Posterior vena cava (tissue), 2 donors: ENCODE measurements at regions of chr22 and their contacts with region 1.

Region 1: GRCh38 chr22:26589845-26590736 is at the start of gene TPST2:
- DNase-seq: peak; percentile 94
- total RNA-seq, gene TPST2: 24.5 to 33.8 TPM

Region 2: GRCh38 chr22:26511857-26512793 is 78.0 kb before region 1 on chr22 and contains the start of gene TFIP11:
- intact Hi-C with region 1: loop called in 1 of 2 experiments (anchors 10 kb)
- DNase-seq: peak; percentile 99
- total RNA-seq, gene TFIP11: 21.3 to 24.2 TPM